AG04449 (cell line): ENCODE measurements at regions of chr13 and their contacts with region 1.

Region 1: DNA sequence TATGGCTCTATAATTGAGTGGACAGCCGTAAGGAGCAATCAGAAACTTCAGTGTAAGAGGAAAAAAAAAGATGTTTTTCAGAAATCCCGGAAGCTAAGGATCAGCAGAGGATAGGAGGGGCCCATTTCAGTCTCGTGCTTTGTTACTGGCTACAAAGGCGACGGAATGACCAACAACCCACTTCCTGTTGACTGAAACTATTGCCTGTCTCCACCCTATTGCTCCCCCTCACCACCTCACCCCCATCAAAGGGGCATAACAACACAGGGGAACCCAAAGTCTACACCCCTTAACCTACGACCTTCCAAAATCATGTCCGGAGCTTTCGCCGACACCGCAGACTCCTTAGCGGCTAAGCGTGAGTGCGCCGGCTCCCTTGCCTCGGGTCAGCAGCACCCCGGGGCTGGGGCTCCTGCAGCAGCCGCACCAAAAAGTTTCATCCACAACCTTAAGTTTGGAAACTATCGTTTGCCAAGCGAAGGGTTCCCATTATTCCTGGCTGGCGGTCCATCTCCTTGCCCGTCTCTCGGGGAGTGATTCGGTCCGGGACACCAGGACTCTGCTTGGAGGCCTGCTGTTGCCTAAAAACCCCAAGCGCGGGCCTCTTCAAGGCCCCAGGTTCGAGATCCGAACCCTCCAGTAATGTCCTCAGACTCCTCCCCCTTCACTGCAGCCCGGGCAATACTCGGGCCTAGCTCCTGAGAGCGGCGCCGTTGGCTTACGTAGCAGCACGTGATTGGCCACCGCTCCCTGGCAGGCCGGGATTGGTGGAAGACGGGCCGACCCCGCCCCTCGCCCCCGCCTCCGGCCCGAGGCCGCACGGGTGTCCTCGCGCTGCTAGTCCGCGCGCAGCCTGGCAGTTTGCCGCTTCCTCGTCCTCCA is at the start of gene TPP2:
- DNase-seq: peak; percentile 83
- H3K4me3 ChIP-seq: peak within 1 kb of the TSS; percentile 96
- CTCF ChIP-seq: no peak

Region 2: GRCh38 chr13:102530751-102531150 is 65.6 kb before region 1 on chr13:
- CTCF ChIA-PET with region 1: no interaction called
- POLR2A ChIA-PET with region 1: no interaction called
- DNase-seq: no peak
- H3K4me3 ChIP-seq: no peak overlapping the region
- CTCF ChIP-seq: no peak

Region 3: DNA sequence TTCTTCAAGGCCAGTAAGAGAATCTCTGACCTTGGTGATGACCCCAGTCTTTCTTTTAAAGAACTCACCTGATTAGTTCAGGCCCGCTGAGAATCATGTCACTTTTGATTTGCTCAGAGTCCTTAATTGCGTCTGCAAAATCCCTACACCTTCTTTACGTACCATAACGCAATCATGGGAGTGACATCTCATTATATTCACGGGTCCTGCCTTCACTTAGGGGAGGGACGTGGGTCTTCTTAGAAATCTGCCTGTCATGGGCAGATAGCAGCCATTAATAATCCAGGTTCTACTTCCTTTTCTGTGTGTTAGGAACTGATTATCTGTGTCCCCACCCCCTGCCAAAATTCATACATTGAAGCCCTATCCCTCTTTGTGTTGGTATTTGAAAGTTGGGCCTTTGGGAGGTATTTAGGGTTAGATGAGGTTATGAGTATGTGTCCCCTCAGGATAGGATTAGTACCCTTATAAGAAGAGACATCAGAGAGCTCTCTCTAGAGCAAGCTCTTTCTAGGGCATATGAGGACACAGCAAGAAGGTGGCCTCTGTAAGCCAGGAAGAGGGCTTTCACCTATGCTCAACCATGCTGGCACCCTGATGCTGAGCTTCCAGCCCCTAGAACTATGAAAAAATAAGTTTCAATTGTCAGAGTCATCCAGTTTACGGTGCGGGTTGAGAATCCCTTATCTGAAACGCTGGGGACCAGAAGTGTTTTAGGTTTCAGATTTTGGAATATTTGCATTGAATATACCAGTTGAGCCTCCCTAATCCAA is 10.3 kb after region 1 on chr13:
- CTCF ChIA-PET with region 1: interaction called, 20 read pairs
- POLR2A ChIA-PET with region 1: no interaction called
- DNase-seq: no peak
- H3K4me3 ChIP-seq: no peak overlapping the region
- CTCF ChIP-seq: no peak

Region 4: GRCh38 chr13:102670130-102670529 is 73.7 kb after region 1 on chr13:
- CTCF ChIA-PET with region 1: no interaction called
- POLR2A ChIA-PET with region 1: no interaction called
- DNase-seq: no peak
- H3K4me3 ChIP-seq: no peak overlapping the region
- CTCF ChIP-seq: no peak

Region 5: DNA sequence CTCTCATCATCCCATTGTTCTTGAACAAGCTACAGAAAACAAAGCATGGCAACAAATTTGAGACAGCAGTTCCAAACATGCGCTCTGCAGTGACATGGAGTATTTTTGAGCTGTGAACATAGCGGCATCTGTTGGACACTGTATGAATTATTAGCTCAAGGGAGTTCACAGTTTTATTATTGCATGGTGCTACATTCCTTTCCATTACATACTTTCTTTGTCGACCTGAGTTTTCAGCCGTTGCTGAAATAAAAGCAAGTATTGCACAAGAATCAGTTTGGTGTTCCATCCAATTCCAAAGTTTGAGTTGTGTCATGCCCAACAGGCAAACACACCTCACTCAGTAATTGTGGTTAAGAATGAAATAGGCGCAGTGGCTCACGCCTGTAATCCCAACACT is 128.5 kb after region 1 on chr13:
- CTCF ChIA-PET with region 1: interaction called, 26 read pairs
- POLR2A ChIA-PET with region 1: interaction called, 4 read pairs
- DNase-seq: peak; percentile 23
- H3K4me3 ChIP-seq: no peak overlapping the region
- CTCF ChIP-seq: peak; percentile 58

Region 6: GRCh38 chr13:102800145-102801041 is 204.0 kb after region 1 on chr13:
- CTCF ChIA-PET with region 1: interaction called, 29 read pairs
- POLR2A ChIA-PET with region 1: no interaction called
- DNase-seq: no peak
- H3K4me3 ChIP-seq: peak overlapping the region; percentile 89
- CTCF ChIP-seq: peak; percentile 94

Region 7: DNA sequence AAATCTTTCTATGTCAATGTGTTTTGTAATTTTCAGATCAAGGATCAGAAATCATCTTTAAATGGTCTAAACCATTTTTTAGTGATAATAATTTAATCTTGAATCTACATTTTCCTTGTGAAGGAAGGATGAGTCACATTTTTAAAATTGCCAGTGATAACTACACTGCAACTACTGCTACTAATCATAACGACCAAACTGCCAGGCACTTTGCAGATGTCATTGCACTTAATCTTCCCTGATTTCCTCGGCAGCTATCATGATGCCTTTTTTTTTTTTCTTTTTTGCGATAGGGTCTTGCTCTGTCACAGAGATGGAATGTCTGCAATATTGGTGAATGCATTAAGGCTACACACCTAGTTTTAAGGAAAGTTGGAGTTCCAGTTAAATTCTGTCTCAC is 511.2 kb after region 1 on chr13:
- CTCF ChIA-PET with region 1: no interaction called
- POLR2A ChIA-PET with region 1: no interaction called
- DNase-seq: no peak
- H3K4me3 ChIP-seq: no peak overlapping the region
- CTCF ChIP-seq: no peak